ENCODE measurements at regions of chr6 and their contacts with region 1.

Region 1: DNA sequence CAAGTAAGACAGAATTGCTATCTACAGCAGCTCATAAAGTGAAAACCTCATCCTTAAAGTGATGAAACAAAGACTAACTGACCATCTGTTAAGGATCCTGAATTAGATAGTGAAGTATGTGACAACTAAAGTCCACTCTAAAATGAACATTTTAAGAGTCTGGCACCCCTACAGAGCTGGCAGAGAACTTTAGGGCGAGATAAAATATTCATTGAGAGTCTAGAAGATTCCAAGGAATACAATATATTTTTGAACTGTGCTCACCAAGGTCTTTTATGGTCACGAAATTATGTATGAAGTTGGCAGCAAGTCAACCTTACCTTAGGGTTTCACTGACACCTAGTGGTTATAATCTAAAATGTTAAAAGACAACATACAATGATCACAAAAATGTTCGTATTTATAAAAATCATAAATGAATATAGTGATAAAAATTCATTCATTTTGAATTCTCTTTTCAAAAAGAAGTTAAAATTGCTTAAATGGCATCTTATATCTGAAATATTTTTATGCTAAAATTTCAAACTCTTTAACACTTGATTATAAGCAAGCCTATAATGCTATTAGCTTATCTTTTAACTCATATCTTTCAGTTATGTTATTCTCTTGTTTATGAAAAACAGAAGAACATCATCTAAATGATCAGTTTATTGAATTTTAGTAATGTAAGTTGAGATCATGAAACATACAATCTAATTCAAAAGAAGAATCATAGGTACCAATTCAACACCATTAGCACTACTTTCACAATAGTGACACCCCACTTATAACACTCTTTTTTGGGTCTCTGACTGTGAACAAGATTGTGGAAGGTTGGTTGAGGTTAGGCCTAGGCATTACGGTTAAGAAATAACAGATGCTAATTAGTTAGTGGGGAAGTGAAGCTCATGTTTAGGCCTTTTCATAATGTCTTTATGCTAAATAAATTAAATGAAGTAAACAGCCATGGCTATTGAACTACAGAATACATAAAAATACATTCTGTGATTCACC is 27.5 kb downstream of the RSPH3 start:
- DNase-seq: peak; percentile 25
- H3K4me3 ChIP-seq: no peak overlapping the region
- H3K27ac ChIP-seq: no peak overlapping the region
- H3K27me3 ChIP-seq: no peaks in the 10 kb centered on the region
- CTCF ChIP-seq: peak; percentile 13

Region 2: GRCh38 chr6:158704181-158704822 is 268.2 kb before region 1 on chr6:
- in situ Hi-C with region 1: loop called (anchors 25 kb)
- DNase-seq: peak; percentile 27
- H3K4me3 ChIP-seq: peak overlapping the region; percentile 56
- H3K27ac ChIP-seq: no peak overlapping the region
- H3K27me3 ChIP-seq: no peaks in the 10 kb centered on the region
- CTCF ChIP-seq: peak; percentile 84

Region 3: GRCh38 chr6:158729914-158730907 is 242.3 kb before region 1 on chr6:
- in situ Hi-C with region 1: no loop called
- DNase-seq: no peak
- H3K4me3 ChIP-seq: no peak overlapping the region
- H3K27ac ChIP-seq: no peak overlapping the region
- H3K27me3 ChIP-seq: no peaks in the 10 kb centered on the region
- CTCF ChIP-seq: no peak

Measured in brain microvascular endothelial cell (primary cell).